A673 (cell line): ENCODE measurements at regions of chr4 and their contacts with region 1.

Region 1: GRCh38 chr4:179307297-179308136 is 1865.3 kb upstream of the AGA start:
- DNase-seq: peak; percentile 56
- H3K4me3 ChIP-seq: no peak overlapping the region
- H3K27ac ChIP-seq: no peak overlapping the region
- H3K4me1 ChIP-seq: no peaks in the 10 kb centered on the region
- H3K27me3 ChIP-seq: peaks cover 3% of the 10 kb centered on the region
- CTCF ChIP-seq: peak; percentile 80

Region 2: DNA sequence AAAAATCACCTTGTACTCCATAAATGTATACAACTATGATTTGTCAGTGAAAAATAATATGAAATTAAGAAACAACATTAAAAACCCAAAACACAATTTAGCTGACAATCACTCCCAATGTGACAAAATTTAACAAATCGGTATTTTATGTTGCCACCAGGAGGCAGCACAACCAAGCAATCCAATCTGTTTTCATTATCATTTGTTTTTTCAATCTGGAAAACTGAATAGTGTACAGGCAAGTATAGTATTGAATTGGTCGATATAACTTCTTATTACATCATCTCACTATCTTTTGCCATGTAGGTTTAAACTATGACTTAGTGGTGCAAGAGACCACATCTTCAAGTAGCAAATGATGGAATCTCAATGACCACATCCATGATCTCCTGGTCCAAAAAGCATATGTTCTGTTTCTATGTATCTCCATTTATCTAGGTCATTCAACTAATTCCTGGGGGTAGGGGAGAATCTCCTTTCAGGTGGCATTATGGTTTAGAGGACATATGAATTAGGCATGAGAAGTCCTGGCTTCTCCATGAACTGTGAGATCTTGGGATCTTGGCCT is 1752.4 kb before region 1 on chr4:
- CTCF ChIA-PET with region 1: no interaction called
- POLR2A ChIA-PET with region 1: no interaction called
- intact Hi-C with region 1: loop called (anchors 5 kb)
- DNase-seq: peak; percentile 41
- H3K4me3 ChIP-seq: no peak overlapping the region
- H3K27ac ChIP-seq: no peak overlapping the region
- H3K4me1 ChIP-seq: no peaks in the 10 kb centered on the region
- H3K27me3 ChIP-seq: no peaks in the 10 kb centered on the region
- CTCF ChIP-seq: peak; percentile 80

Region 3: DNA sequence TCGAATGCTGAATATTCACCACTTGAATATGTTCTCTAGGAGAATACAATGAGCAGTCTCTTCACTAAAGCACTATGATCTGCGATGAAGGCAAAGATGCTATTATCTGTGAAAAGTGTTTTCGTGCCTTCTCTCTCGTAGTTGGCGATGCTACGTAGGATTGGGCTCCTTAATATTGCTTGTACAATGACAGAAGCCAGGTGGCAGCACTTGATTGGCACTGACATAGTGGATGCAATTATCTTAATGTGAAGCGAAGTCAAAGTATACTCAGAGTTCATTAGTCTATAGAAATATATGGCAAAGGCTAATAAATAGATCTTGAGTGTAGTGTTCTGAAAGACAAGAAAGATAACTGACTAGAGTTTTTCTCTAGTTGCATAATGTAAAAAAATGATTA is 729.6 kb before region 1 on chr4:
- CTCF ChIA-PET with region 1: interaction called, 6 read pairs
- POLR2A ChIA-PET with region 1: no interaction called
- intact Hi-C with region 1: loop called (anchors 2 kb)
- DNase-seq: peak; percentile 15
- H3K4me3 ChIP-seq: no peak overlapping the region
- H3K27ac ChIP-seq: no peak overlapping the region
- H3K4me1 ChIP-seq: no peaks in the 10 kb centered on the region
- H3K27me3 ChIP-seq: no peaks in the 10 kb centered on the region
- CTCF ChIP-seq: peak; percentile 54

Region 4: DNA sequence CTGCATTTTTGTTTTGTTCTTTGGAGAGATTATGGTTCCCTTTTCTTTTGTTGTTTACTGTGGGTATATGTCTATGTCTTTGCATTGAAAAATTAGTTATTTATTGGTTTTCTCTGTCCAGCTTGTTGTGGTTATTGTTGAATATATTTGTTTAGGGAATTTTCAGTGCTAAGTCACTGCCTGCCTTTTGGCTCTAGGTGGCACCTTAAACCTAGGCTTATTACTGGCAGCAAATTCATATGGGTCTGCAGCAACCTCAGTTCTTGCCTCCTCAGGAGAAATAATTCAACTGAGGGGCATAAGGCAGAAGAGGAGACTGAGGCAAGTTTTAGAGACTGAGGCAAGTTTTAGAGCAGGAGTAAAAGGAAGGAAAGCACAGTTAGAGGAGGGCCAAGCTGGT is 708.0 kb before region 1 on chr4:
- CTCF ChIA-PET with region 1: interaction called, 3 read pairs
- POLR2A ChIA-PET with region 1: no interaction called
- intact Hi-C with region 1: loop called (anchors 5 kb)
- DNase-seq: peak; percentile 1
- H3K4me3 ChIP-seq: no peak overlapping the region
- H3K27ac ChIP-seq: no peak overlapping the region
- H3K4me1 ChIP-seq: no peaks in the 10 kb centered on the region
- H3K27me3 ChIP-seq: no peaks in the 10 kb centered on the region
- CTCF ChIP-seq: peak; percentile 40

Region 5: DNA sequence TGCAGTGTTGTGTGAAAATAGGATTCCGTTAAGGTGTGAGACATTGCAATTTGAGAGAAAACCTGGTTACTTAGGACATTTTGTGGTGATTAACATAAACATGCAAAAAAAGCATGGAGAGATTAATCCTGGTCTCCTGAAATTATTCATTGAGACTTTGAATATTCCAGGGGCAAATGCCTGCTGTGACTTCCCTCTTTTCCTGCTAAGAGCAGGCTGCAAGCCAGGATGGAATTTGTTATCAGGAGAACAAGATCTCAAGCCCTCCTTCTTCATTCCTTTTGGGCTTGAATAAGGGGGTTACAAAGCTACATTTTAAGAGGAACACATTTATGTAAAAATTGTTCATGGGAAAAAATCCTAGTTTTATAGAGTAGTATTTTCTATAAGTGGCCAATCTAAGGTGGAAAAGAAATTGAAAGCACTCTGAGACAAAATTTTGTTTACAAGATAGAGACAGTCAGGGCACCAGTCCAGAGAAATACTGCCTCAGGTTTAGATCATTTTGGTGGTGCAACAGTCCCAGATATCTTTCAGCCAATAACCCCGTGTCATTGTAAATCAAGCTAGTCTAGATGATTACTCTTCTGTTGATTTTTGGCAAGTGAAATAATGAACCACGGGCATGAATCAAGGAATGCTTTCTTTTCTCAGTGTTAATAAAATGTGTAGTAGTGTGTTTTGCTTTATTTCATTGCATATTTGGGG is 336.9 kb before region 1 on chr4:
- CTCF ChIA-PET with region 1: interaction called, 3 read pairs
- POLR2A ChIA-PET with region 1: no interaction called
- intact Hi-C with region 1: loop called (anchors 10 kb)
- DNase-seq: no peak
- H3K4me3 ChIP-seq: no peak overlapping the region
- H3K27ac ChIP-seq: no peak overlapping the region
- H3K4me1 ChIP-seq: no peaks in the 10 kb centered on the region
- H3K27me3 ChIP-seq: peaks cover 3% of the 10 kb centered on the region
- CTCF ChIP-seq: no peak